Prostate gland (tissue), 2 donors: ENCODE measurements at regions of chr20 and their contacts with region 1.

Region 1: GRCh38 chr20:13852306-13852705 is 67.5 kb downstream of the NDUFAF5 start:
- DNase-seq: no peak
- H3K4me3 ChIP-seq: no peak overlapping the region
- H3K27ac ChIP-seq: peak overlapping the region; percentile 7 to 40
- H3K4me1 ChIP-seq: no peaks in the 10 kb centered on the region
- H3K27me3 ChIP-seq: no peaks in the 10 kb centered on the region
- CTCF ChIP-seq: no peak
- POLR2A ChIP-seq: no peak

Region 2: GRCh38 chr20:13865791-13866351 is 13.6 kb after region 1 on chr20:
- intact Hi-C with region 1: loop called (anchors 2 kb)
- DNase-seq: no peak
- H3K4me3 ChIP-seq: no peak overlapping the region
- H3K27ac ChIP-seq: peak overlapping the region; percentile 35 to 46
- H3K4me1 ChIP-seq: no peaks in the 10 kb centered on the region
- H3K27me3 ChIP-seq: no peaks in the 10 kb centered on the region
- CTCF ChIP-seq: no peak
- POLR2A ChIP-seq: no peak